Left ventricle myocardium superior (tissue), 1 donor: ENCODE measurements at regions of chr1 and their contacts with region 1.

Region 1: GRCh38 chr1:55204997-55205396 is 10.2 kb downstream of the USP24 start:
- DNase-seq: no peak
- ATAC-seq: peak; percentile 54

Region 2: DNA sequence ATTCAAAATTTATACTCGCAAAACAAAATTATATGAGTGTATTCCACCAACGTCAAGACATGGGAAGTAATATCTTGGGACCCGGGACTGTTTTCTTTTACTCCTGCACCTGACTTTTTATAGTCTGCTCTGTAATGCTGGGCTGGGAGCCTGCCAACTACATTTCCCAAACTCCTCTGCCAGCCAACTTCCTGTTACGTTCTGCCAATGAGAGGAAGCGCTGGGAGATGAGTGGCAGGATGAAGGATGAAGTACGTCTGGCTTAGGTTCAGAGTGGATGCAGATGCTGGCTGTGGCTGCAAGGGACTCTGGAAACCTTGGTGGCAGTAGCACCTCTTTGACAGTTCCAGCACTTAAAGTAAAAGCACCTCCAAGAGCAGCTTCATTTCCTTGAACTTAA is 49.5 kb before region 1 on chr1:
- intact Hi-C with region 1: loop called (anchors 10 kb)
- DNase-seq: peak; percentile 68
- ATAC-seq: peak; percentile 93